HEK293T (cell line): ENCODE measurements at regions of chr20 and their contacts with region 1.

Region 1: GRCh38 chr20:34708621-34709043 is 4.5 kb downstream of the TP53INP2 start:
- DNase-seq: peak; percentile 30

Region 2: GRCh38 chr20:34536798-34537394 is 171.7 kb before region 1 on chr20:
- CTCF ChIA-PET with region 1: interaction called, 15 read pairs
- POLR2A ChIA-PET with region 1: interaction called, 3 read pairs
- DNase-seq: peak; percentile 45